ENCODE measurements at regions of chr6 and their contacts with region 1.

Region 1: GRCh38 chr6:156564127-156564806 is 212.9 kb upstream of the ARID1B start:
- DNase-seq: peak in 1 of 2 experiments; percentile 59
- H3K4me3 ChIP-seq: no peak overlapping the region
- H3K27ac ChIP-seq: no peak overlapping the region
- H3K4me1 ChIP-seq: no peaks in the 10 kb centered on the region
- H3K27me3 ChIP-seq: no peaks in the 10 kb centered on the region
- CTCF ChIP-seq: peak; percentile 92

Region 2: GRCh38 chr6:155327326-155328073 is 1236.8 kb before region 1 on chr6:
- CTCF ChIA-PET with region 1: no interaction called
- POLR2A ChIA-PET with region 1: no interaction called
- intact Hi-C with region 1: loop called (anchors 5 kb)
- DNase-seq: peak in 1 of 2 experiments; percentile 33
- H3K4me3 ChIP-seq: no peak overlapping the region
- H3K27ac ChIP-seq: no peak overlapping the region
- H3K4me1 ChIP-seq: no peaks in the 10 kb centered on the region
- H3K27me3 ChIP-seq: no peaks in the 10 kb centered on the region
- CTCF ChIP-seq: peak; percentile 89

Region 3: DNA sequence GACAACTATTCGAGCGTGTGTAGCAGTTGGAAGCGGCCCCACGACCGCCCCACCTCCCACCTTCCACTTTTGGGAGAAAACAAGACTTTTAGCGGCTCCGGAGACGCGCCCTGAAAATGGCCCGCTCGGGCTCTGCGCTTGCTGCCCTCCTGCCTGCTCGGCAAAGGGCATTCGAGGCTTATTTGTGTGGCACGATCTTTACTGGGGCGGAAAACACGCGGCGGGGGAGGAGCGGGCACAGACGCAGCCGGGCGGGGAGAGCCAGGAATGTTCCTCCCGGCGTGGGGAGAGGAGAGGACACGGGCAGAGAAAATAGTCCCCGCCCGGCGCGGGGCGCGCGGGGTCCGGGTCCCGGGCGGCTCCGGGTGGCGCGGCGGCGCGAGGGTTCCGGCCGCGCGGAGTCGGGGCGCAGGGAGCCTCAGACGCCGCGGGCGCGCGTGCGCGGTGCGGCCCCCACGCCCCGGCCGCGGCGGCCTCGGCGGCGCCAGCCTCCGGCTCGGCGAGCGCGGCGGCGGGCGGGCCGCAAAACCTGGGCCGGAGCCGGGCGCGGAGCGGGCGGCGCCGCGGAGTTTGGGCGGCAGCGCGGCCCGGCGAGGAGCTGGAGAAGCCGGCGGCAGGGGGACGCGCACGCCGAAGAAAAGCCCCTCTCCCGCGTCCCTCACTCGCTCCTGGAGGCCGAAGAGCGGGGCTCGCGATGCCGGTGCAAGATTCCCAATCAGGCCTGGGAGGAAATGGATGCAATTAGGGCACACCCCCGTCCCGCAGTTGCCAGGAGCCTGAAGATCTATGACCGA is 122.9 kb after region 1 on chr6:
- CTCF ChIA-PET with region 1: no interaction called
- POLR2A ChIA-PET with region 1: no interaction called
- intact Hi-C with region 1: loop called (anchors 5 kb)
- DNase-seq: peak; percentile 43 to 82
- H3K4me3 ChIP-seq: peak overlapping the region; percentile 82
- H3K27ac ChIP-seq: peak overlapping the region; percentile 86
- H3K4me1 ChIP-seq: peaks cover 16% of the 10 kb centered on the region
- H3K27me3 ChIP-seq: no peaks in the 10 kb centered on the region
- CTCF ChIP-seq: no peak

Region 4: DNA sequence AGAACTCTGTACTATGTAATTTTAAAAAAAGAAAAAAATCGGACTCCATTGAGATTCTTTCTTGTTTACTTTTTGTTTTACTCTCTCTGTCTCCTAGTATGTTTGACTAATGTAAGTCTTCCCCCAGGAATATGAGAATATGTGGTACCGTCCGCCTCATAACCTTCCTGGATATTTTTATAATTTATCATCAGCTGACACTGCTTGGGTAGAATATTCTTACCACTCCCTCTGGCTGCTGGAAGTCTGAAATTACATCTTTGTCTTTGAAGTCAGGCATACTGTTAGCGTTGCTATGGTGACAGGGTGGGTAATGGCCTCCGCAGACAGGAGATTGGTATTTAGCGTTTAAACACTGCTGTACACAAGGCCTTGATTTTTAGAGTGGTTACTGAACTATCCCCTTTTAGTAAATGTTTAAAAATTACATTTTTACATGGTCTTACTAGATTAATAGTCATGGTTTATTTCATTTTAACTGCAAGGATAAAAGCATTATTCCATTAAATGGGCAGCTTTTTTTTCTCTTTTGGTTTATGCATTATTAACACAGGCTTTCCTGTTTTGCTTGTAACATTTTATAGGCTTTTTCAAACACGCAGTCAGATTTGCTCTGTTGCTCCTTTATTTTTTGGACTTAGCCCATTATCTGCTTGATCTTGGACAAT is 389.3 kb after region 1 on chr6:
- CTCF ChIA-PET with region 1: no interaction called
- POLR2A ChIA-PET with region 1: no interaction called
- intact Hi-C with region 1: loop called (anchors 10 kb)
- DNase-seq: peak; percentile 56 to 93
- H3K4me3 ChIP-seq: no peak overlapping the region; the same call in 1 of the 2 replicates
- H3K27ac ChIP-seq: peak overlapping the region; percentile 35
- H3K4me1 ChIP-seq: peaks cover 40% of the 10 kb centered on the region
- H3K27me3 ChIP-seq: no peaks in the 10 kb centered on the region
- CTCF ChIP-seq: 0 out of 2 replicates have a peak, but pooled peaks have one; percentile 16

Region 5: GRCh38 chr6:157274471-157275226 is 710.4 kb after region 1 on chr6:
- CTCF ChIA-PET with region 1: no interaction called
- POLR2A ChIA-PET with region 1: no interaction called
- intact Hi-C with region 1: loop called (anchors 10 kb)
- DNase-seq: peak in 1 of 2 experiments; percentile 75
- H3K4me3 ChIP-seq: peak overlapping the region; percentile 72
- H3K27ac ChIP-seq: no peak overlapping the region
- H3K4me1 ChIP-seq: no peaks in the 10 kb centered on the region
- H3K27me3 ChIP-seq: no peaks in the 10 kb centered on the region
- CTCF ChIP-seq: peak; percentile 39; the same call in 1 of the 2 replicates